ENCODE measurements at regions of chr12 and their contacts with region 1.

Region 1: GRCh38 chr12:122888232-122888867 is 7.6 kb downstream of the VPS37B start:
- DNase-seq: peak in 1 of 2 donors; percentile 27
- ATAC-seq: peak; percentile 64 to 88 (median 82)
- H3K4me3 ChIP-seq: peak overlapping the region in 8 of 10 donors; percentile 6 to 47 (median 28)
- H3K27ac ChIP-seq: peak overlapping the region; percentile 66 to 90 (median 84)
- H3K4me1 ChIP-seq: peaks cover 23 to 97% (median 92%) of the 10 kb centered on the region in 9 donors
- H3K27me3 ChIP-seq: no peaks in the 10 kb centered on the region
- CTCF ChIP-seq: no peak

Region 2: DNA sequence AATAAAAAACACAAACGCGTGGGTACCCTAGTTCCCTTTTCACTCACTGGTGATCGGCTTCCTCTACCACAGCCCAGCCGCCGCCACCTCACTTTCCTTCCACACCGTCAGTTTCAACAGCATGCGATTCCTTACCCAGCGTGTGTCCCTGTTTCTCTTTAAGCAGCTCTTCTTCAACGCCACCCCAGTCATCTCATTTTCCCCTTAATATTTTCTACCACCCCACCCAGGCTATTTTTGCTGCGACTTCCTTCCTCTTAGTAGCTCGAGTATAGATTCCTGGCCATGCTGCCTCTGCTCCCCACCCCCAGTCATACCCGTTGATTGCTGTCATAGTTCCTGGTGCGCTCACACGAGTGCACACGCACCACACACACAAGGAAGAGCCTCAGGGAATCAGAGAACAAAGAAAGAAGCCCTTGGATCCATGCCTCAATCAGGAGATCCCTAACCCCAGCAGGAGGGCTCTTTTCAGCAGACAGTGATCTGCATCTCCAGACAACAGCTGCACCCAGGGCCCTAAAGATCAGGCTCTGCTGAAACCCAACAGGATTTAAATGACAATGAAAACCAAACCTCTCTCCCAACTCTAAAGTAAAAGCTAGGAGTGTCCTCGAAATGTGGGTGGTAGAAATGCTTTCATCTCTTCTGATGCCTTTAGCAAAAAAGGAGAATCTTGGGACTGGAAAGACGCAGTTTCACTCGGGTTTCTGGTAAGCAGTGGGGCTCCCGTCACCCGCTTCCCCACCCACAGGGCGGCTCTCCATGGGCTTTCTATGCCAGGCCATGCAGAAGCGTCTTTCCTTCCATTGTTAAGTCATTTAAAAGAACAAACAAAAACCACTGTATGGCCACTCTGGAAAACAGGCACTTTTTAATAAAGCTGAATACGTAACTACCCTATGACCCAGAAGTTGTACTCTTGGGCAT is 16.2 kb before region 1 on chr12:
- intact Hi-C with region 1: loop called in 2 of 10 experiments (anchors 2 kb)
- DNase-seq: peak in 1 of 2 donors; percentile 83
- ATAC-seq: peak in 7 of 8 donors; percentile 48 to 83 (median 72)
- H3K4me3 ChIP-seq: peak overlapping the region in 9 of 10 donors; percentile 33 to 56 (median 49)
- H3K27ac ChIP-seq: peak overlapping the region; percentile 80 to 95 (median 88)
- H3K4me1 ChIP-seq: peaks cover 33 to 100% (median 95%) of the 10 kb centered on the region in 9 donors
- H3K27me3 ChIP-seq: no peaks in the 10 kb centered on the region
- CTCF ChIP-seq: no peak

Measured in heart right ventricle (tissue), 16 donors.